Dendritic cell treated with granulocyte-macrophage colony-stimulating factor and Interleukin-4, amounts not matched to agents 40 ng/mL and 50 ng/mL, for 4 days (primary cell): ENCODE measurements at regions of chr14 and their contacts with region 1.

Region 1: DNA sequence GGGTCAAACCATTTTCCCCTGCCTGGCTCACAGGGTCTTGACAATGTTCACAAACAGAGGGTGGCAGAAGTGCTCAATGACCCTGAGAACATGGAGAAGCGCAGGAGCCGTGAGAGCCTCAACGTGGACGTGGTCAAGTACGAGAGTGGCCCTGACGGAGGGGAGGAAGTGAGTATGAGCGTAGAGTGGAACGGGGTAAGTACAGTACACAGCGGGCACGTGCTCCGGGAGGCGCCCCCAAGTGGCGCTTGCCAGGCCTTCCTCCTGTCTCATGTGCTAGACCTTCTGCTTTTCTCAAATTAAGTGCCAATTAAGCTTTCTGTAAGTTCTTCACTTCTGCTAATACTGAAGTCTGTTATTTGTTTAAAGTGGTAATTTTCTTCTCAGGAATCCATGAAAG is 35.9 kb downstream of the XRCC3 start:
- H3K4me3 Mint-ChIP-seq: no peak overlapping the region
- H3K27ac Mint-ChIP-seq: peak overlapping the region; percentile 70
- H3K4me1 Mint-ChIP-seq: peaks cover 13% of the 10 kb centered on the region
- H3K27me3 Mint-ChIP-seq: no peaks in the 10 kb centered on the region

Region 2: DNA sequence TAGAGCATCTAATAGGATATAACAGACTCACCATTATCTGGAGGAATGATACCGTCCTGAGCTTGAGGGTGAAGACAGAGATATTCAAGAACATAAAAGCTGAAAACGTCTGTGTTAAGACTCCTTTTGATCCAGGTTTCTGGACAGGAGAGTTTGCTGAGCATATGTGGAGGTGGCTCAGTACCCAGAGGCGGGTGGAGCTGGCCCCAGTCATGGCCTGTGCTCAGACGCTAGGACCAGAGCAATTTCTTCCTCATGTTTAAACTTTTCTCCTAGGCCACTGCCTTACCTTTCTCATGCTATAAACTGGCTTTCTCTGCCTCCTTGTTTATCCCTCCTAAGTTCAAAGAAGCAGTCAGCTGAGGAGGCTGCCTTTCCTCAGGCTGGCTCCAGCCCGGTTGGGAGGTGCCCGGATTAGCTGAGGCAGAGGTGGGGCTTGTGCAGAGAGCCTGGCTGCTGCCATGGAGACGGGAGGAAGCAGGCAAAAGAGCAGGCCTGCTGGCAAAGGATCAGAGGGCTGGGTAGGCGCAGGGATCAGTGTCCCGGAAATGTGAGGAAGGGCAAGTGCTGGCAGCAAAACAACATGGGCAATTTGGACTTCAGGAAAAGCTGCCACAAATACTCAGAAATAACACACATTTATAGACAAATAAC is 102.9 kb before region 1 on chr14:
- intact Hi-C with region 1: loop called (anchors 1 kb)
- H3K4me3 Mint-ChIP-seq: no peak overlapping the region
- H3K27ac Mint-ChIP-seq: peak overlapping the region; percentile 18
- H3K4me1 Mint-ChIP-seq: no peaks in the 10 kb centered on the region
- H3K27me3 Mint-ChIP-seq: no peaks in the 10 kb centered on the region

Region 3: GRCh38 chr14:103606963-103607668 is 72.2 kb before region 1 on chr14:
- intact Hi-C with region 1: loop called (anchors 5 kb)
- H3K4me3 Mint-ChIP-seq: peak overlapping the region; percentile 73
- H3K27ac Mint-ChIP-seq: peak overlapping the region; percentile 71
- H3K4me1 Mint-ChIP-seq: peaks cover 60% of the 10 kb centered on the region
- H3K27me3 Mint-ChIP-seq: peaks cover 43% of the 10 kb centered on the region

Region 4: DNA sequence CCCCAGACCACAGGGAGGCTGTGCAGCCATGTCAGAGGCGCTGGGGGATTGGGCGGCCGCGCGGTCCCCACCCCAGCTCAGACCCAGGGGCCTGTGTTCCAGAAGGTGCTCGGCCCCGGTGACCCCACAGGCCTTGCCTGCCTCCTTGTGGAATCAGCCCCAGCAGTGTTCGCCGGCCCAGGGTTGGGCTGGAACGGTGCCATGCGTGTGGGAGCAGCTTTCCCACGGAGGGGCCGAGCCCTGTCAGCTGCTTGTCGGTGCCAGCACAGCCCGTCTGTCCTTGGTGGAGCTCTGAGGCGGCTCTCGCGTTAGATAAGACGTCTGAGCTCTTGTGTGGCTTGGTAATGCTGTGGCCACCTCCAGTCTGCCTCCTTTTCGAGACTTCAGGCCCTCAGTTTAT is 44.8 kb after region 1 on chr14:
- intact Hi-C with region 1: no loop called
- H3K4me3 Mint-ChIP-seq: no peak overlapping the region
- H3K27ac Mint-ChIP-seq: no peak overlapping the region
- H3K4me1 Mint-ChIP-seq: peaks cover 20% of the 10 kb centered on the region
- H3K27me3 Mint-ChIP-seq: no peaks in the 10 kb centered on the region